ENCODE measurements at regions of chr13 and their contacts with region 1.

Region 1: GRCh38 chr13:29508130-29508875 is 87.2 kb downstream of the SLC7A1 start:
- DNase-seq: peak; percentile 89
- ATAC-seq: peak; percentile 91

Region 2: GRCh38 chr13:29707876-29708543 is 199.7 kb after region 1 on chr13:
- intact Hi-C with region 1: loop called (anchors 1 kb)
- DNase-seq: peak; percentile 54
- ATAC-seq: peak; percentile 70

Region 3: DNA sequence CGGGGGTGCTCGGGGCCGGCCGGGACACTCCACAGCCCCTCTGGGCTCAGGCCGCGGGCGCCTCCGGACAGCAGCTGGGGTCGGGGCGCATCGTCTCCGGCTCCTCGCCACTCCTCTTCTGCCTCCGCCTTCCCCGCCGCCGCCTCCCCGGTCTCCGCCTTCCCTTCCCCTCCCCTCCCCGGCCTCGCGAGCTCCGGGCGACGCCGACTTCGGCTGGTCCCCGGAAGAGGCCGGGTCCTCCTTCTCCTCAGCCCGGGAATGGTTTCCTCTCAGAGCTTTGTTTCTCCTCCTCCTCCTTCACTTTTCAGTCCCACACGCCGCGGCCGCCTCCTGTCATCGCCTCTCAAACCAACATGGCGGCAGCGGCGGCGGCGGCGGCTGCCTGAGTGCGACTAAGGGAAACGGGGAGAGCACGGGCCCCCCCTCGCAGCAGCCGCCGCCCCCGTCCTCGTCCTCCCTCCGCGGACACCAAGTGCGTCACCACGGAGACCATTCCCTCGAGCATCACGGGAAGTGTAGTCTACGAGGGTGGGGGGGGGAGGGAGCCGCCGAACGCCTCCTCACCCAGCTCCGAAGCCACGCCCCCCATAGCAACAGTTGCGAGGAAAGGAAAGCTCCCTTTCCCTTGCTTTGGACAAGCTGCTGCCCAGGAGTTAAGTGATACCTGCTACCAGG is 342.1 kb after region 1 on chr13 and contains the start of gene UBL3:
- intact Hi-C with region 1: loop called (anchors 10 kb)
- DNase-seq: peak; percentile 97
- ATAC-seq: peak; percentile 95
- total RNA-seq, gene UBL3: 21.1 TPM

Region 4: DNA sequence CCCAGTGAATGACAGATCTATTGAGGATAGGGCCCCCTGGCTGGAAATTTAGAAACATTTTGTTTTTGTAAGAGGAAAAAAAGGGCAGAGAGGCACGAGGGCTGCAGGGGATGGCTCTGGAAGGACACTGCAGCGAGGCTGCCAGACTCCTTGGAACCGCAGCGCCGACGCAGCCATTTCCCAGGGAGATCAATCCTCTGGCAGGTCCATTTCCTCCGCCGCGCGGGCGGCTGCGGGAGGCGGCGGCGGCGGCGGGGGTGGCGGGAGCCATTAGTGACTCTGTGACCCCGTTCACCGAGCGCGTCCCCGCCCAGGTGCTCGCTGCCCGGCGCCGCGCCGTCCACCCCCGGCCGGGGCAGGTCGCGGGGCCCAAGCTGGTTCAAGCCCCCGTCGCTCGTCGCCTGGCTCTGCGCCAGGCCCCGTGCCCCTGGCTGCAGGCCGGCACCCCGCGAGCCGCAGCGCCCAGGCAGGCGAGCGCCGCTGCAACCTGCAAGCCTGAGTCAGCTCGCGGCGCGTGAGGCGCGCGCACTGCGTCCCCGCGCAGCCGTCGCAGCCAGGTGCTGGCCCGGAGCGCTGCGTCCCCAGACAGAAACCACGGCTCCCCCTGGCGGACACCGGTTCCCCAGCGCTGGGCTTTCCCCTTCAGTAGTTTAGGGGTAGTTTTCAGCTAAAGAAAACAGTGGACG is 606.4 kb after region 1 on chr13:
- intact Hi-C with region 1: loop called (anchors 5 kb)
- DNase-seq: peak; percentile 94
- ATAC-seq: peak; percentile 88

Measured in Right ventricle myocardium superior (tissue), 1 donor.